Activated CD8-positive, alpha-beta T cell treated with anti-CD3 and anti-CD28 coated beads, Interleukin-2, amount 10 ng/mL, durations not matched to agents 7 days and 5 days (primary cell): ENCODE measurements at regions of chr22 and their contacts with region 1.

Region 1: DNA sequence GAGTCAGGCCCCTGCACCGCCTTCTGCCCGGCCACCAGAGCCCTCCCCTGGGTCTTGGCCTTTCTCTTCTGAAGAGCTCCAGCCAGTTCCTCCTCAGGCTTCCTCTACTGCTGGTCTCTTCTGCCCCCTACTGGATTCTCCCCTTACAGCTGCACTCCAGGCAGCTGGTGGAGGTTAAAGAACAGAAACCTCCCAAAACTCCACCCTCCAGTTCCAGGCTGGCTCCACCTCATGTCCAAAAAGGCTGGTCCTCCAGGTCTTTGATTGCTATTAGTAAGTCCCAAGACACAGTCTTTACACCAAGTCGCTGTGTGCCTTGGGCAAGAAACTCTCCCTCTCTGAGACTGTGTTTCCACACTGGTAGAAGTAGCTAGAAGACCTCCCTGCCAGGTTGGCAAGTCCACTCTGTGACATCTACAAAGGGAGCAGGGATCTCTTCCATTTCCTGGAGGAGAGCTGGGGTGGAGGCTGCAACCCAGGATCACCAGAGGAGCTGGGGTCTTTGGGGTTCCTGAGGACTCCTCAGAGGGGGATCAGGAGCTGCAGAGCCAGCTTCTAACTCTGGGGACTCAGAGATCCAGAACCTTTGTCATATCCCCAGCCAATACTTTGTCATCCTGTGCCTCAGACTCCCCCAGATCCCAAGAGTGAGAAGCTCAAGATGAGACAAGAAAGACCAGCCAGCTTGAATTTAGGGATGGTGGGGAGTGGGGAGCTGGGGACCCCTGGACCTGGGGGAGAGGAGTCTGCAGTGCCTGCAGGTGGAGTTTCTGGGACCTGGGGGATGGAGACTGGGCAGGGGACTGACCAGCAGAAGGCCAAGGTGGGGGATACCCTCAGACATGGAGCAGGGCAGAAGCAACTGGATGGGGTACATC is 3.4 kb upstream of the IGLL5 start:
- DNase-seq: peak; percentile 85
- ATAC-seq: peak; percentile 90
- H3K4me3 Mint-ChIP-seq: no peak overlapping the region
- H3K27ac Mint-ChIP-seq: no peak overlapping the region
- H3K4me1 Mint-ChIP-seq: peaks cover 19% of the 10 kb centered on the region
- H3K27me3 Mint-ChIP-seq: peaks cover 28% of the 10 kb centered on the region

Region 2: DNA sequence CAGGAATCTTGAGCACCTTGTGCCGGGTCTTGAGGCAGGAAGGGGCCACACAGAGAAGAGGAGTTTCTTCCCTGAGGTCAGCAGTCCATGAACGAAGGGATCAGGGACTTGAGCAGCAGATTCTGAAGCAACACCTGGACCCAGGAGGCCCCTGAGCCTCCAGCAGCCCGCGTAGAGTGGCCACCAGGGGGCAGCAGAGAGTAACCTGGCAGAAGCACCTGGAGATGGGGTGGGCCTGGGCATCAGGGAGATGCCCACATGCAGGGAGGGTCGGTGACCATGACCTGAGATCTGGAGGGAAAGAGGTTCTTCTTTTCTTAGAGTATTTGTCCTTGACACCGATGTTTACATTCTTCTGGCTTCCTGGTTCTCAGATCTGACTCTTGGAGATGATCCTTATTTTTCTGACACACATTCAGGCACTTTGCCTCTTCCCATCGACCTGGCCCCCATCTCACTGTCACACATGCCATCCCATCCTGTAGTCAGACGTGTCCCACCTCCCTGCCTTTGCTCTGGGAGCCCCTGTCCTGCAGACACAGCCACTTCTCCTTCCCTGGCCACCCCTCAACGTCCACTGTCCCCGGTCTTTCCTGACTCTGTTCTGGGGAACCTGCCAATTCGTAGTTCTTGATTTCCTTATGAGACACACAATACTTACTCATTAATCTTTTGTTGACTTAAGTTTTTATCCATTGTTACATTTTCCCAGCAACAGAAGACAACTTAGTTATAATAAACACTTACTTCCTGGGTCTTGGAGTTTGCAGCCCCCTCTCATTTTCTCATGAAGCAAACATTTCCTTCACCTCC is 173.3 kb before region 1 on chr22:
- CTCF ChIA-PET with region 1: interaction called, 12 read pairs
- POLR2A ChIA-PET with region 1: no interaction called
- DNase-seq: peak; percentile 81
- ATAC-seq: peak; percentile 86
- H3K4me3 Mint-ChIP-seq: no peak overlapping the region
- H3K27ac Mint-ChIP-seq: no peak overlapping the region
- H3K4me1 Mint-ChIP-seq: peaks cover 4% of the 10 kb centered on the region
- H3K27me3 Mint-ChIP-seq: no peaks in the 10 kb centered on the region

Region 3: DNA sequence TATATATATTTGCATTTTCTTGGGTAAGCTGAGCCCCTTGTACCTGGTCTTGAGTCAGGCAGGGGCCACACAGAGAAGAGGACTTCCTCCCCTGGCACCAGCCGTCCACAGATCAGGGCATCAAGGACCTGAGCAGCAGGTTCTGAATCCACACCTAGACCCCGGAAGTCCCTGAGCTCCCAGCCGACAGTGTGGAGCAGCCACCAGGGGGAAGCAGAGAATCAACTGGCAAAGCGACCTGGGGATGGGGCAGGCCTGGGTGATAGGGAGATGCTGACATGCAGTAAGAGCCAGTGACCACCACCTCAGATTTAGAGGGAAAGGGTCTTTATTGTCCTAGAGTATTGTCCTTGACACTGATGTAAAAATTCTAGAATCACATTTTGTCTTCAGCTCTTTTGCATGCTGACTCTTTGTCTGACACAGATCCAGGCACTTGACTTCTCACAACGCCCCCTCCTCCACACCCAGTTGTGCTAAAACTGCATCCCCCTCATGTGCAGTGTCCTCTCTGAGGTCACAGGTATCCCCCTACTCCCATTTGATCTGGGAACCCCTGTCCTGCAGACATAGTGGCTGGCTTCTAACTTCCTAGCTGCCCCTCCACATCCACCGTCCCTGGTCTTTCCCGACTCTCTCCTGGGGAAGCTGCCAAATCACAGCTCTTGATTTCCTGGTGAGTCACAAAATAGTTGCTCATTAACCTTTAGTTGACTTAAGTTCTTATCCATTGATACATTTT is 130.6 kb before region 1 on chr22:
- CTCF ChIA-PET with region 1: interaction called, 125 read pairs
- POLR2A ChIA-PET with region 1: no interaction called
- DNase-seq: peak; percentile 86
- ATAC-seq: peak; percentile 97
- H3K4me3 Mint-ChIP-seq: no peak overlapping the region
- H3K27ac Mint-ChIP-seq: no peak overlapping the region
- H3K4me1 Mint-ChIP-seq: peaks cover 34% of the 10 kb centered on the region
- H3K27me3 Mint-ChIP-seq: peaks cover 6% of the 10 kb centered on the region

Region 4: GRCh38 chr22:22802339-22802970 is 81.8 kb before region 1 on chr22:
- CTCF ChIA-PET with region 1: interaction called, 256 read pairs
- POLR2A ChIA-PET with region 1: interaction called, 3 read pairs
- DNase-seq: peak; percentile 71
- ATAC-seq: peak; percentile 73
- H3K4me3 Mint-ChIP-seq: no peak overlapping the region
- H3K27ac Mint-ChIP-seq: no peak overlapping the region
- H3K4me1 Mint-ChIP-seq: peaks cover 2% of the 10 kb centered on the region
- H3K27me3 Mint-ChIP-seq: peaks cover 22% of the 10 kb centered on the region

Region 5: GRCh38 chr22:22855617-22856308 is 28.5 kb before region 1 on chr22:
- CTCF ChIA-PET with region 1: interaction called, 77 read pairs
- POLR2A ChIA-PET with region 1: interaction called, 4 read pairs
- DNase-seq: peak; percentile 56
- ATAC-seq: peak; percentile 83
- H3K4me3 Mint-ChIP-seq: no peak overlapping the region
- H3K27ac Mint-ChIP-seq: no peak overlapping the region
- H3K4me1 Mint-ChIP-seq: no peaks in the 10 kb centered on the region
- H3K27me3 Mint-ChIP-seq: peaks cover 40% of the 10 kb centered on the region

Region 6: GRCh38 chr22:22894740-22895731 is 10.8 kb after region 1 on chr22:
- CTCF ChIA-PET with region 1: interaction called, 18 read pairs
- POLR2A ChIA-PET with region 1: no interaction called
- DNase-seq: no peak
- ATAC-seq: peak; percentile 27
- H3K4me3 Mint-ChIP-seq: no peak overlapping the region
- H3K27ac Mint-ChIP-seq: no peak overlapping the region
- H3K4me1 Mint-ChIP-seq: peaks cover 4% of the 10 kb centered on the region
- H3K27me3 Mint-ChIP-seq: peaks cover 53% of the 10 kb centered on the region